Mammary epithelial cell (primary cell): ENCODE measurements at regions of chr9 and their contacts with region 1.

Region 1: GRCh38 chr9:109574068-109574882 is 76.2 kb upstream of the PTPN3 start:
- DNase-seq: peak; percentile 43
- H3K4me3 ChIP-seq: no peak overlapping the region
- H3K27ac ChIP-seq: no peak overlapping the region
- H3K4me1 ChIP-seq: peaks cover 5% of the 10 kb centered on the region
- H3K27me3 ChIP-seq: no peaks in the 10 kb centered on the region
- CTCF ChIP-seq: peak; percentile 67 to 74

Region 2: DNA sequence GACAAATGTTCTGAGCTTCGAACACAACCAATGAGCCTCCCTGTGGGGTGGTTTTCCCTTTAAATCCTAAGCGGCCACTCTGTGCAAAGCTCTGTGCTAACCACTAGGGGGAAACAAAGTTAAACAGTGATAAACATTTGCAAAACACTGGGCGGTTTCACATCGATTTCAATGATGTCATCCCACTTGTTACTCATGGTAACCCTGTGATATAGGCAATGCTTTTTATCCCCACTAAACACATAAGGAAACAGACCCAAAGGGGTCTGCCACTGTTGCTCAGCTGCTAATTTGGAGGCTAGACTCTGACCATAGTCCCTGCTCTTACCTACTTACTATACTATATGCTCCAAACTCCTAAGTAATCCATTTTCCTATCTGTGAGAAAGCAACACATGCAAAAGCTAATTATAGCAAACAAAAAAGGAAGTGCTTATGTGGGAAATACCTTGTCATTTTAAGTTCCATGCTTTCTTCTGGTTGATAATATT is 133.4 kb before region 1 on chr9:
- CTCF ChIA-PET with region 1: no interaction called
- dilution Hi-C with region 1: no loop called
- in situ Hi-C with region 1: no loop called
- intact Hi-C with region 1: no loop called
- DNase-seq: peak; percentile 77
- H3K4me3 ChIP-seq: no peak overlapping the region
- H3K27ac ChIP-seq: peak overlapping the region; percentile 51
- H3K4me1 ChIP-seq: peaks cover 22% of the 10 kb centered on the region
- H3K27me3 ChIP-seq: no peaks in the 10 kb centered on the region
- CTCF ChIP-seq: peak; percentile 91 to 92

Region 3: DNA sequence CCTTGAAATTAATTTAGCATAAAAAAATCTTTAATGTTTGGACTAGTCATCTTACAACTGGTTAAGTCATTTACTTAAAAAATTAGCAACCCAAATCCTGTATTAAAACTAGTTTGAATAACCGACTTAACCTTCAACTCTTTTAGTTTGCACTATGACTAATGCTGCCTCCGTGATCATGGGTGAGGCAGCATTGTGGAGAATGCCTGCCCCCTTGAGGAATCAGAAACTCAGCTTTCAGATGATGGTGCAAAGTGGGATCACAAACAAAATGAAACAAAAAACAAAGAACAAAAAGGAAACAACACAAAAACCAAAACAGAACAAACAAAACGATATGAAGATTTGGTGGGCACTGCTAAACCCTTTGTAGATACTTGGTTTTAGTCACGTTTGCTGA is 78.7 kb after region 1 on chr9:
- CTCF ChIA-PET with region 1: no interaction called
- dilution Hi-C with region 1: no loop called
- in situ Hi-C with region 1: no loop called
- intact Hi-C with region 1: loop called (anchors 2 kb)
- DNase-seq: peak; percentile 44
- H3K4me3 ChIP-seq: no peak overlapping the region
- H3K27ac ChIP-seq: no peak overlapping the region
- H3K4me1 ChIP-seq: no peaks in the 10 kb centered on the region
- H3K27me3 ChIP-seq: peaks cover 7% of the 10 kb centered on the region
- CTCF ChIP-seq: peak; percentile 42 to 60

Region 4: GRCh38 chr9:109887079-109887478 is 312.8 kb after region 1 on chr9:
- CTCF ChIA-PET with region 1: no interaction called
- dilution Hi-C with region 1: no loop called
- in situ Hi-C with region 1: no loop called
- intact Hi-C with region 1: loop called (anchors 2 kb)
- DNase-seq: peak; percentile 40
- H3K4me3 ChIP-seq: no peak overlapping the region
- H3K27ac ChIP-seq: peak overlapping the region; percentile 31
- H3K4me1 ChIP-seq: peaks cover 44% of the 10 kb centered on the region
- H3K27me3 ChIP-seq: no peaks in the 10 kb centered on the region
- CTCF ChIP-seq: no peak

Region 5: GRCh38 chr9:110058304-110058953 is 484.2 kb after region 1 on chr9:
- CTCF ChIA-PET with region 1: no interaction called
- dilution Hi-C with region 1: no loop called
- in situ Hi-C with region 1: loop called (anchors 10 to 25 kb)
- intact Hi-C with region 1: loop called (anchors 1 kb)
- DNase-seq: peak; percentile 57
- H3K4me3 ChIP-seq: no peak overlapping the region
- H3K27ac ChIP-seq: no peak overlapping the region
- H3K4me1 ChIP-seq: peaks cover 5% of the 10 kb centered on the region
- H3K27me3 ChIP-seq: no peaks in the 10 kb centered on the region
- CTCF ChIP-seq: peak; percentile 61 to 79

Region 6: GRCh38 chr9:110152704-110153374 is 578.6 kb after region 1 on chr9:
- CTCF ChIA-PET with region 1: no interaction called
- dilution Hi-C with region 1: no loop called
- in situ Hi-C with region 1: loop called in 1 of 2 experiments (anchors 25 kb)
- intact Hi-C with region 1: loop called (anchors 2 kb)
- DNase-seq: peak; percentile 45
- H3K4me3 ChIP-seq: no peak overlapping the region
- H3K27ac ChIP-seq: no peak overlapping the region
- H3K4me1 ChIP-seq: peaks cover 28% of the 10 kb centered on the region
- H3K27me3 ChIP-seq: no peaks in the 10 kb centered on the region
- CTCF ChIP-seq: peak; percentile 70 to 75

Region 7: DNA sequence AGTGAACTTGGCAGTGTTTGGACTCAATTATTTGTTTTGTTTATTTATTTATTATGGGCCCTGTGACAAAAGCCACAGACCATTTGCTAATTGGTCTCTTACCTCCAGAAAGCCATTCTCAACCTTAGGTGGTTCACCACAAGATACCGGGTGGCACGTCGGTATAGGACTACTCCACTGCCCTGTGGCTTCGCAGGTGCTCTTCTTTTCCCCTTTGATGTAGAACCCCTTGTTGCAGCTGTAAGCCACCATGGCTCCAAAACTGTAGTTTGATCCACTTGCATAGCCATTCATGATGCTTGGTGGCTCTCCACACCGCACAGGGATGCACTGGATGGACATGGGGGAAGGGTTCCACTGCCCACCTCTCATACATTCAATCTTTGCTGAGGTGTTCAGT is 836.7 kb after region 1 on chr9:
- CTCF ChIA-PET with region 1: no interaction called
- dilution Hi-C with region 1: no loop called
- in situ Hi-C with region 1: no loop called
- intact Hi-C with region 1: no loop called
- DNase-seq: no peak
- H3K4me3 ChIP-seq: no peak overlapping the region
- H3K27ac ChIP-seq: no peak overlapping the region
- H3K4me1 ChIP-seq: no peaks in the 10 kb centered on the region
- H3K27me3 ChIP-seq: no peaks in the 10 kb centered on the region
- CTCF ChIP-seq: no peak